Pancreas (tissue), 10 donors: ENCODE measurements at regions of chr15 and their contacts with region 1.

Region 1: GRCh38 chr15:72199711-72200212 is 2.2 kb upstream of the GRAMD2A start:
- DNase-seq: peak; percentile 58 to 85 (median 78)
- ATAC-seq: peak; percentile 78 to 87 (median 84)
- H3K4me3 ChIP-seq: no peak overlapping the region
- H3K27ac ChIP-seq: no peak overlapping the region
- H3K4me1 ChIP-seq: no peaks in the 10 kb centered on the region
- H3K27me3 ChIP-seq: peaks cover 0 to 3% (median 0%) of the 10 kb centered on the region in 4 donors
- CTCF ChIP-seq: peak; percentile 77 to 87 (median 84)

Region 2: DNA sequence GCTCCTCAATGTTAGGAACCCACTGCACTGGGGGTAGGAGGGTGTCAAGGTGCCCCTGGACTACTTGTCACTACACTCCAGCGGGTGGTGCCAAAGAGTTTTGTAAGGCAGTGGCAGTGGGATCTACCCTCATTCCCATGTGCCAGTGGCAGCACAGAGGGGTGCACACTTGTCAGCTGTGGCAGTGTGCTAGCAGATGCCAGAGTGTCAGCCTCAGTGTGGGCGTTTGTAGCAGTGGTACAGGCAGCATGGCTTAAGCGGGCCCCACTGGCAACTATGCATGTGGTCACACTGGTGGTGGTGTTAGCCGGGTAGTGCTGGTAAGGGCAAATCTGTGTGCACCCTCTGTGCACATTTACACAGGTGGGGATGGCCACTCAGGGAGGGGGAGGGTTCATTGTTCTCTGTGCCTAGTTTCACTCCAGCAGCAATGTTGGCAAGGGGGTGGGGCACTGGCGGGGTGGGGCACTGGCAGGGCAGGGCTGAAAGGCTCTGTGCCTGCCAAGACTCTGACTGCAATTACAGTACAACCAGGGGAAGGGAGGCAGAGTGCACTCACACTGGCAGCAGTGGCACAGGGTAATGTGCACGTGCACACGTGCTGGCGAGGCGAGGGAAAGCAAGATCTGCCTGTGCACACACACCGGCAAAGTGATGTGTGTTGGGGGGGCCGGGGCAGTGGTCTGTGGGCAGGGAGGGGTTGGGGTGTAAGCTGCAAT is 113.6 kb before region 1 on chr15:
- intact Hi-C with region 1: no loop called
- DNase-seq: peak in 1 of 6 donors; percentile 13
- ATAC-seq: peak in 2 of 4 donors; percentile 39 to 82
- H3K4me3 ChIP-seq: no peak overlapping the region
- H3K27ac ChIP-seq: no peak overlapping the region
- H3K4me1 ChIP-seq: no peaks in the 10 kb centered on the region
- H3K27me3 ChIP-seq: no peaks in the 10 kb centered on the region
- CTCF ChIP-seq: no peak

Region 3: DNA sequence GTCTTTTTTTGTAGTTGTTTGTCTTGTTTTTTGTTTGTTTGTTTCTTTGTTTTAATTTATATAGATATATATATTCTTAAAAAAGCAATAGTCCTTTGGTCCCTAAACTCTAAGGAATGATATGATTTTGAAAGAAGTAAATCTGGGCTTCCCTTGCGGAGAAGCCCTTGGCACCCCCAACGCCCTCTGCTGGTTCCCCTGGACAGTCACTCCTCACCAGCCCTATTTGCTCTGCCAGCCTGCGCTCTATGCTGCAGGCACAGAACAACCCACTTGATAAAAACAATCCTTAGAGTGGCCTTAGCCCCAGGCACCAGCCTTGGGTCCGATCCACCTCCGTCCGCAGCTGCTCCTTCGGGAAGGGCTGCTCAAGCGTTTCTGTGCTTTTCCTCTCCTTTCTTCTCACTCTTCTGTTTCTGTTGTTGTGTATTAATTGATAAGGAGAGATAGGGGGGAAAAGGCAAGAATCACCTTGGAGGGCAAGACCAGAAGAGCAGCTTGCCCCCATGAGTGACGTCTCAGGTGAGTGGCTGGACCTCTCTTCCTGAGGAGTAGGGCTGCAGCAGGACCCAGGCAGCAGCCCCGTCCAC is 86.3 kb after region 1 on chr15:
- intact Hi-C with region 1: loop called in 1 of 3 experiments (anchors 5 kb)
- DNase-seq: peak; percentile 37 to 73 (median 60)
- ATAC-seq: peak; percentile 73 to 95 (median 92)
- H3K4me3 ChIP-seq: no peak overlapping the region
- H3K27ac ChIP-seq: no peak overlapping the region
- H3K4me1 ChIP-seq: no peaks in the 10 kb centered on the region
- H3K27me3 ChIP-seq: no peaks in the 10 kb centered on the region
- CTCF ChIP-seq: peak; percentile 44 to 55 (median 46)